Gastrocnemius medialis (tissue), 4 donors: ENCODE measurements at regions of chr16 and their contacts with region 1.

Region 1: GRCh38 chr16:73196670-73197069 is 148.7 kb upstream of the ZFHX3 start:
- DNase-seq: peak; percentile 51 to 80
- ATAC-seq: peak; percentile 91 to 99
- H3K4me3 ChIP-seq: no peak overlapping the region
- H3K27ac ChIP-seq: no peak overlapping the region
- H3K4me1 ChIP-seq: peaks cover 0 to 3% of the 10 kb centered on the region in 2 donors
- H3K27me3 ChIP-seq: no peaks in the 10 kb centered on the region
- CTCF ChIP-seq: peak; percentile 68 to 79 (median 73)
- POLR2A ChIP-seq: no peak

Region 2: GRCh38 chr16:72501739-72502593 is 694.7 kb before region 1 on chr16:
- in situ Hi-C with region 1: loop called (anchors 10 to 25 kb)
- intact Hi-C with region 1: loop called (anchors 1 kb)
- DNase-seq: peak in 1 of 2 donors; percentile 24
- ATAC-seq: peak; percentile 52 to 55
- H3K4me3 ChIP-seq: no peak overlapping the region
- H3K27ac ChIP-seq: no peak overlapping the region
- H3K4me1 ChIP-seq: no peaks in the 10 kb centered on the region
- H3K27me3 ChIP-seq: no peaks in the 10 kb centered on the region
- CTCF ChIP-seq: peak; percentile 41 to 75 (median 67)
- POLR2A ChIP-seq: no peak

Region 3: GRCh38 chr16:72783716-72784318 is 412.9 kb before region 1 on chr16:
- in situ Hi-C with region 1: no loop called
- intact Hi-C with region 1: loop called (anchors 5 kb)
- DNase-seq: no peak
- ATAC-seq: no peak
- H3K4me3 ChIP-seq: no peak overlapping the region
- H3K27ac ChIP-seq: no peak overlapping the region
- H3K4me1 ChIP-seq: peaks cover 0 to 3% of the 10 kb centered on the region in 2 donors
- H3K27me3 ChIP-seq: no peaks in the 10 kb centered on the region
- CTCF ChIP-seq: no peak
- POLR2A ChIP-seq: no peak

Region 4: GRCh38 chr16:73036074-73036826 is 160.4 kb before region 1 on chr16:
- in situ Hi-C with region 1: no loop called
- intact Hi-C with region 1: no loop called
- DNase-seq: no peak
- ATAC-seq: no peak
- H3K4me3 ChIP-seq: no peak overlapping the region
- H3K27ac ChIP-seq: peak overlapping the region; percentile 88 to 99 (median 97)
- H3K4me1 ChIP-seq: peaks cover 70 to 96% of the 10 kb centered on the region in 2 donors
- H3K27me3 ChIP-seq: no peaks in the 10 kb centered on the region
- CTCF ChIP-seq: no peak
- POLR2A ChIP-seq: no peak

Region 5: DNA sequence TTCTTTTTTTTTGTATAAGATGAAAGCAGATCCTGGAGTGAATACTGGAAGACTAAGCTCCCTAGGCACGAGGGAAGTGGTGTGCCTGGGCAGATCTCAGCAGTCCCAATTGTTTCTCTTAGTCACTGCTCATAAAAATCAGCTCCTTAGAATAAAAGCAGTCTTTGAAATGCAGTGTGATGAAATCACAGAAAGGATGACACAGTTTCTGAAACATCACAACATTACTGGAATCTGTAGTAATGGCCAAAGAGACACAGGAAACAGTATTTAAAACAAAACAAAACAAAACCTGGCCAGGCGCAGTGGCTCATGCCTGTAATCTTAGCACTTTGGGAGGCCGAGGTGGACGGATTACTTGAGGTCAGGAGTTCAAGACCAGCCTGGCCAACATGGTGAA is 114.1 kb before region 1 on chr16:
- in situ Hi-C with region 1: loop called in 1 of 4 experiments (anchors 25 kb)
- intact Hi-C with region 1: no loop called
- DNase-seq: no peak
- ATAC-seq: peak; percentile 68 to 76
- H3K4me3 ChIP-seq: no peak overlapping the region
- H3K27ac ChIP-seq: peak overlapping the region in 1 of 4 donors; percentile 28
- H3K4me1 ChIP-seq: no peaks in the 10 kb centered on the region
- H3K27me3 ChIP-seq: no peaks in the 10 kb centered on the region
- CTCF ChIP-seq: no peak
- POLR2A ChIP-seq: no peak

Region 6: GRCh38 chr16:74216319-74216718 is 1019.6 kb after region 1 on chr16:
- in situ Hi-C with region 1: no loop called
- intact Hi-C with region 1: no loop called
- DNase-seq: no peak
- ATAC-seq: no peak
- H3K4me3 ChIP-seq: no peak overlapping the region
- H3K27ac ChIP-seq: no peak overlapping the region
- H3K4me1 ChIP-seq: no peaks in the 10 kb centered on the region
- H3K27me3 ChIP-seq: no peaks in the 10 kb centered on the region
- CTCF ChIP-seq: no peak
- POLR2A ChIP-seq: no peak